Activated CD4-positive, alpha-beta T cell treated with anti-CD3 and anti-CD28 coated beads for 36 hours (primary cell): ENCODE measurements at regions of chr3 and their contacts with region 1.

Region 1: DNA sequence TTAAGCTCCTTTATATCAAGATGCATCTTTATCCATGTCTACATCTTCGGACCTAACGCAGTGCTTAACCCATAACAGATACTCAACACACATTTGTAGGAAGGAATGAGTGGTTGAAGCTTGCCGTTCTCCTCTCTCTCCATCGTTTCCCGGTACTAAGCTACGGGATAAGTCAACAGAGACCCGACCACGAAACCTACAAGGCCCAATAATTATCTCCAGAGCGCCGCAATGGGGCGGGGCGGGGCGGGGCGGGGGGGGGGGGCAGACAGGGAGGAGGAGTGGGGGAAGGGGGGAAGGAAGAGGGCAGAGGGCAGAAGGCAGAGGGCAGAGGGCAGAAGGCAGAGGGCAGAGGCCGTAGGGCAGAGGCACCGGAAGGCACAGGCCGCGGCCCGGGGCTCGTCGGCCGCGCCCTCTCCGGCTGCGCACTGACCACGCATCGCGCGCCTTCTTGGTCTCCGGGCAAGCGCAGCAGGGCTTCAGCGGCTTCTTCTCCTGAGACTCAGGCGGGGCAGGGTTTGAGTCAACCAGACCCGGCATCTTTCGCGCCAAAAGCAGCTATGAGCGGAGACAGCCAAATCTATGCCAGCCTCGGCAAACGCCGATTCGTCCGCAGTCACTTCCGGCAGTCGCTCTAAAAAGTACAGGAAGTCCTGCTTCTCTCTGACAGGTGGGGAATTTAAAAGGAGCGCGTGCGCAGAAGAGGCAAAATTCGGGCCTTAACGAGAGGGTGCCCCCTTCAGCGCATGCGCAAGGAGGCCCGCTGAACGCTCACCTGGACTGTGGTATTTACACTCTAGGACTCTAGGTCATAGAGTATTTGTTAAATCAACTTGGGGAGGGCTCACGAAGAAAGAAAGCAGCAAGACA is at the start of gene COX17:
- DNase-seq: peak; percentile 97
- ATAC-seq: peak; percentile 91
- H3K4me3 Mint-ChIP-seq: peak within 1 kb of the TSS; percentile 95
- H3K27ac Mint-ChIP-seq: peak within 1 kb of the TSS; percentile 97
- H3K4me1 Mint-ChIP-seq: peaks cover 36% of the 10 kb centered on the region
- H3K27me3 Mint-ChIP-seq: no peaks in the 10 kb centered on the region
- total RNA-seq, gene COX17: 69.5 to 82.8 TPM

Region 2: DNA sequence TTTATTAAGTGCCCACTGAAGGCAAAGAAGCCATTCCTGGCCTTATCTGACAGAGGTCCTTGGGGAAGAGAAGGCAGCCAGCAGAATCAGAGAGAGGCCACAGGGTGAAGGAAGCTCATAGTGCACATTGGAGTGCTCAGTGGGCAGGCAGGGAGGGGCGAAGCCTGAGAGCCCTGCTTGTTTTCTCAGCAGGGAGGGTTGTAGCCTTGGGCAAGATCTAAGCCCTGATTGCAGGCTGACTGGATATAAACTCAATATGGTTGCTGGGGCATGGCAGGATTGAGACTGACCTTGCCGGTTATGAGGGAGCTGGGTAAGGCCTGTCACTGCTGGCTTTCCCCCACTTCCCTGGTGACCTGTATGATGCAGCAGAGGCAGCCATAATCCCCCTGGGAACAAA is 634.8 kb before region 1 on chr3:
- CTCF ChIA-PET with region 1: no interaction called
- POLR2A ChIA-PET with region 1: no interaction called
- intact Hi-C with region 1: no loop called
- DNase-seq: no peak
- ATAC-seq: no peak
- H3K4me3 Mint-ChIP-seq: no peak overlapping the region
- H3K27ac Mint-ChIP-seq: no peak overlapping the region
- H3K4me1 Mint-ChIP-seq: no peaks in the 10 kb centered on the region
- H3K27me3 Mint-ChIP-seq: peaks cover 20% of the 10 kb centered on the region

Region 3: GRCh38 chr3:119219069-119219468 is 457.9 kb before region 1 on chr3:
- CTCF ChIA-PET with region 1: no interaction called
- POLR2A ChIA-PET with region 1: no interaction called
- intact Hi-C with region 1: loop called in 1 of 2 experiments (anchors 5 kb)
- DNase-seq: peak; percentile 64
- ATAC-seq: peak; percentile 93
- H3K4me3 Mint-ChIP-seq: peak overlapping the region; percentile 45
- H3K27ac Mint-ChIP-seq: peak overlapping the region; percentile 84
- H3K4me1 Mint-ChIP-seq: peaks cover 51% of the 10 kb centered on the region
- H3K27me3 Mint-ChIP-seq: no peaks in the 10 kb centered on the region

Region 4: GRCh38 chr3:119322835-119323722 is 353.9 kb before region 1 on chr3:
- CTCF ChIA-PET with region 1: interaction called, 4 read pairs
- POLR2A ChIA-PET with region 1: no interaction called
- intact Hi-C with region 1: loop called (anchors 1 kb)
- DNase-seq: peak; percentile 97
- ATAC-seq: peak; percentile 92
- H3K4me3 Mint-ChIP-seq: peak overlapping the region; percentile 83
- H3K27ac Mint-ChIP-seq: peak overlapping the region; percentile 87
- H3K4me1 Mint-ChIP-seq: peaks cover 46% of the 10 kb centered on the region
- H3K27me3 Mint-ChIP-seq: no peaks in the 10 kb centered on the region

Region 5: DNA sequence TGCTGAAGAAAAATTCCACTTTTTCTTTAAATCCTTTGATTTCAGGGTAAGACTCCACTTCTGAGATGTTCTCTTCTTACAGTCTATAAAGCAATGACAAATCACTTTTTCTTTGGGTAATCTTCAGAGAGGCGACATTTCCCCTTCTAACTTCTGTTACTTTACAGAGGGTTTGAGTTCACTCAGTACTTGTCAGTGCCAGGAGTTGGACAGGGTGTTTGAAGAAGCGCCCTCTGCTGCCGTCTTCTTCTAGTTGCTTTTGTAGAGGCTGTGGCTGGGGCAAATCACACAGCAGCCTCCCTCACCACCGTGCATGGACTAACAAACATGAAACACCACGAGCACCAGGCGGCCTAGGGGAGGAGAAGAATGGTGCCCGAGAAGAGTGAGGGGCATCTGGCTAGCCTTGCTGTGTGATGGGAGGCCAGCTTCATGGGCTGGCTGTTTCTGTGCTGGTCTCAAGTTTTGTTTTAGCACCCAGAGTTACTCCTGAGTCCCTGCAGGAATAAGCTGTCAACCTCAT is 117.5 kb before region 1 on chr3 and contains the start of gene CD80:
- CTCF ChIA-PET with region 1: interaction called, 4 read pairs
- POLR2A ChIA-PET with region 1: no interaction called
- intact Hi-C with region 1: loop called in 1 of 2 experiments (anchors 5 kb)
- DNase-seq: peak; percentile 81
- ATAC-seq: peak; percentile 88
- H3K4me3 Mint-ChIP-seq: no peak within 1 kb of the TSS
- H3K27ac Mint-ChIP-seq: peak within 1 kb of the TSS; percentile 15
- H3K4me1 Mint-ChIP-seq: peaks cover 13% of the 10 kb centered on the region
- H3K27me3 Mint-ChIP-seq: no peaks in the 10 kb centered on the region
- total RNA-seq, gene CD80: 0.74 to 1.2 TPM

Region 6: DNA sequence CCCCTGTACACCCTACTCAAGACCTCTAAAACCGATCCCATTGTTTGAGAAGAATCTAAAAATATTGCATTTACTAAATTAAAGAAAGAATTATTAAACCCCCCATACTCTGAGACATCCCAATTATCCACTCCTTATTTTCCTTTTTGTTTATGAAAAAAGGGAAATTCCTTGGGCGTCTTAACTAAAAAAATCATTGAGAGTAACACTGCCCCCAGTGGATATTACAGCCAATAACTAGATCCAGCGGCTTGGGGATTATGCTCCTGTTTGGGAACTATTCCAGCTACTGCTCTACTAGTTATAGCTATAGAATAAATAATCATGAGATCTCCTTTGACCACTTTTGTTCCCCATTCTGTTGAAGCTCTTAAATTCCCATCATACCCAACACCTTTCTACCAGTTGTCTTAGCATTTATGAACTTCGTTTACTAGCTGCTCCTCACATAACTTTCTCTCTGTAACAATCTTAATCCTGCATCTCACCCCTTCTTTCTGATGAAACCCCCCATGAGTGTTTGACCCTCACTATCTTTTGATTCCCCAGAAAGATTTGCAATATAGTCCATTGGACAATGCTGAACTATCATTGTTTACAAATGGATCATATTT is 13.1 kb after region 1 on chr3:
- CTCF ChIA-PET with region 1: interaction called, 25 read pairs
- POLR2A ChIA-PET with region 1: interaction called, 3 read pairs
- intact Hi-C with region 1: no loop called
- DNase-seq: no peak
- ATAC-seq: no peak
- H3K4me3 Mint-ChIP-seq: no peak overlapping the region
- H3K27ac Mint-ChIP-seq: no peak overlapping the region
- H3K4me1 Mint-ChIP-seq: no peaks in the 10 kb centered on the region
- H3K27me3 Mint-ChIP-seq: peaks cover 3% of the 10 kb centered on the region

Region 7: GRCh38 chr3:119891944-119892721 is 215.1 kb after region 1 on chr3:
- CTCF ChIA-PET with region 1: no interaction called
- POLR2A ChIA-PET with region 1: no interaction called
- intact Hi-C with region 1: no loop called
- DNase-seq: peak; percentile 52
- ATAC-seq: peak; percentile 80
- H3K4me3 Mint-ChIP-seq: no peak overlapping the region
- H3K27ac Mint-ChIP-seq: no peak overlapping the region
- H3K4me1 Mint-ChIP-seq: peaks cover 19% of the 10 kb centered on the region
- H3K27me3 Mint-ChIP-seq: no peaks in the 10 kb centered on the region

Region 8: GRCh38 chr3:119973289-119973688 is 296.3 kb after region 1 on chr3:
- CTCF ChIA-PET with region 1: no interaction called
- POLR2A ChIA-PET with region 1: no interaction called
- intact Hi-C with region 1: no loop called
- DNase-seq: no peak
- ATAC-seq: no peak
- H3K4me3 Mint-ChIP-seq: no peak overlapping the region
- H3K27ac Mint-ChIP-seq: no peak overlapping the region
- H3K4me1 Mint-ChIP-seq: peaks cover 29% of the 10 kb centered on the region
- H3K27me3 Mint-ChIP-seq: no peaks in the 10 kb centered on the region

Region 9: GRCh38 chr3:120742198-120742849 is 1065.3 kb after region 1 on chr3 and contains the starts of genes GTF2E1 and RABL3:
- CTCF ChIA-PET with region 1: no interaction called
- POLR2A ChIA-PET with region 1: no interaction called
- intact Hi-C with region 1: loop called (anchors 5 to 10 kb)
- DNase-seq: peak; percentile 96
- ATAC-seq: peak; percentile 99
- H3K4me3 Mint-ChIP-seq: peak within 1 kb of the TSS; percentile 98
- H3K27ac Mint-ChIP-seq: peak within 1 kb of the TSS; percentile 95
- H3K4me1 Mint-ChIP-seq: peaks cover 28% of the 10 kb centered on the region
- H3K27me3 Mint-ChIP-seq: no peaks in the 10 kb centered on the region
- total RNA-seq, gene GTF2E1: 26.1 to 27.0 TPM
- total RNA-seq, gene RABL3: 35.5 to 37.8 TPM